ENCODE measurements at regions of chr2 and their contacts with region 1.

Region 1: DNA sequence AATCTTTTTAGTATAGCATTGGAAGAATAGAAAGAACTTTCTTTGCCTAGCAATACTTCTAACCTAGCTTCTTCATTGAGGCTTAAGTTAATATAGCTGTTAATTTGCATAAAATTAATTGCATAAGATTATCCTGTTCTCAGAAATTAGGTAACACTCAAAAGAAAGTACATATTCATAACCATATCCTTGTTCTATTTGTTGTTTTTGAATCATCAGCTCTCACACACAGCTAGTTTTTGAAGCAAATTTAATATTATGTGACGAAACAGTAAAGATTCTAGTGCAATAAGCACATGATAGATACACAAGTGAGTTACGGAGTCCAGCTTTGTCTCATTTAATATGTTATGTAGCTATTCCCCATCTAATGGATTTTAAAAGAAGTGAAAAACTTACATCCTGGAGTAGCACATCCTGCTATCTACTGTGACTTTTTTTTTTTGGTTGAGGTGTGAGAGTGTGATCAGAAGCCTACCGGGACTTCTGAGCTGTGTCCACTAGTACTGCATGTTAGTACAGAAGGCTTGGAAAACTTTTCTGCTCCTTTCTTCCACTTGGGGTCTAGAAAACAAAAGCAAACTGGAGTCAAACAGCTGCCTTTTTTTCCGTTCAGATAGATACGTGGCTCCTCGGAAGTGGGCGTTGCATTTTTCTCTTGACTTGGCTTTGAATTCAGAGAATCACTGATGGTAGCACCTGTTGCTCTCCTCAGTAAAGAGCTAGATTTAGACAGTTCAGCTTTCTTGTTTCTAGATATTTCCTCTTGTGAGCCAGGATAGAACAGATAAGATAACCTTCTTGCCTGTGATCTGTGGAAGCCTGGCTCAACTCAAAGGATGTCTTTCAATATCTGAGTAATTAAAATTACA is 27.2 kb downstream of the KDM3A start:
- DNase-seq: no peak
- ATAC-seq: peak; percentile 42
- H3K4me3 Mint-ChIP-seq: no peak overlapping the region
- H3K27ac Mint-ChIP-seq: peak overlapping the region; percentile 61
- H3K4me1 Mint-ChIP-seq: peaks cover 21% of the 10 kb centered on the region
- H3K27me3 Mint-ChIP-seq: no peaks in the 10 kb centered on the region

Region 2: GRCh38 chr2:86455181-86455580 is 13.2 kb before region 1 on chr2:
- CTCF ChIA-PET with region 1: interaction called, 10 read pairs
- DNase-seq: no peak
- ATAC-seq: no peak
- H3K4me3 Mint-ChIP-seq: no peak overlapping the region
- H3K27ac Mint-ChIP-seq: no peak overlapping the region
- H3K4me1 Mint-ChIP-seq: no peaks in the 10 kb centered on the region
- H3K27me3 Mint-ChIP-seq: no peaks in the 10 kb centered on the region

Measured in activated CD8-positive, alpha-beta memory T cell treated with anti-CD3 and anti-CD28 coated beads, Interleukin-2, amount 10 ng/mL, durations not matched to agents 7 days and 5 days (primary cell).